ENCODE measurements at regions of chr22 and their contacts with region 1.

Region 1: DNA sequence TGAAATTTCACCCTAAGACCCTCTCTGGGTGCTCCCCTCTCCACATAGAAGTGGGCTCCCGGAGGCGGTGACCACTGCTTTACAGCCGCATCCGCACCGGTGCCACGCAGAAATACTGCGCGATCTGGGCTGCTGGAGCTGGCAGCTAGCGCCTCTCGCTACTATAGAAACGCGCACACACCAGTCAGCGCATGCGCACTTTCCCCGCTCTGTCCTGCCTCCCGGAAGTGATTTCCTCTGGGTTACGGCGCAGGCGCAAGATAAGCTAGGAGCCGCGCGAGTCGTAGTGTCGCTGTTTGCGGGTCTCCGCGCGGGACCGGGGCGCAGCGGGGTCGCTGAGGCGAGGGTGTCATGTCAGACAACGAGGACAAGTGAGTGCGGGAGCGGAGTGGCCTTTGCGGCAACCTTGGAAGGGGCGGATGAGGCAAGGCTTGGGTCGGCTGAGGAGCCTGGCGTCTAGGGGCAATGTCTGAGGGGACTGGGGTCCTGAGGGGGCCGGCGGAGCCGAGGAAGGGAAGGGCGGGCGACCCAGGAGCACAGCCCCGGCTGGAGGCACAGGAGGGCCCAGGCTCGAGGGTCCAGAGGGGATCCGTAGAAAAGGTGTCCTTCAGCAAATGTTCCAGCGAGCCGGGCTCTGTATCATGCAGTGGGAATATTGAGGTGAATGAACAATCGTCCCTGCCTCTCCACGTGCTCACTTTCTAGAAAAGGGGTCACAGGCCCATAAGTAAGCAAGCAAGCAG is at the starts of genes C22orf23 and POLR2F:
- DNase-seq: peak; percentile 94 to 96
- H3K4me3 ChIP-seq: peak within 1 kb of the TSS; percentile 100
- H3K4me1 ChIP-seq: peaks cover 5% of the 10 kb centered on the region
- H3K27me3 ChIP-seq: no peaks in the 10 kb centered on the region

Region 2: DNA sequence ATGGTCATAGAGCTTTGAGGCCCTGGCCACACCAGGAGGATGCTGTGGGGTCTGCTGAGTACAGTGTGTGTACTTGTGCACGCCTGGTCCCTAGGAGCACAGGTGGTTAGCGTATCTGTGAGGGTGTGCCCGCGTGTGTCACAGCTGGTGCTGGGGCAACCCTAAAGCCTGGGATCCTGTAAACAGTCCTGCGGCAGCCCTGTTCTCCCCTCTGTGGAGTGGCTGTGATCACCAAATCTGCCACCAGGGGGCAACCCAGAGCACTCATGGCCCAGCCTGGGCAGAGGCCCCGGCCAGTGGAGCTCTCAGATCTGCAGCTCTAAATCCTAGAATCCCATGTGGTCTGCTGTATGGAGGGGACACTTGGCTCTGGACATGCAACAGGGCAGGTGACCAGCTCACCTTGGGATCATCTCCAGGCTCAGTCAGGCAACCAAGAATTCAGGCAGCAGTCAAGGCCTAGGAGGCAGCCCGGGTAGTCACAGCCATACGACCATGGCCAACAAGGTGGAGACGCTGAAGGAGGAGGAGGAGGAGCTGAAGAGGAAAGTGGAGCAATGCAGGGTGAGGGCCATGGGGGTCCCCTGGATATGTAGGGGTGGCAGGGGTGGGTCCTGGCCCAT is 310.3 kb before region 1 on chr22:
- in situ Hi-C with region 1: no loop called
- DNase-seq: peak; percentile 41 to 93
- H3K4me3 ChIP-seq: no peak overlapping the region
- H3K4me1 ChIP-seq: peaks cover 5% of the 10 kb centered on the region; the same call in 1 of the 2 replicates
- H3K27me3 ChIP-seq: no peaks in the 10 kb centered on the region

Region 3: DNA sequence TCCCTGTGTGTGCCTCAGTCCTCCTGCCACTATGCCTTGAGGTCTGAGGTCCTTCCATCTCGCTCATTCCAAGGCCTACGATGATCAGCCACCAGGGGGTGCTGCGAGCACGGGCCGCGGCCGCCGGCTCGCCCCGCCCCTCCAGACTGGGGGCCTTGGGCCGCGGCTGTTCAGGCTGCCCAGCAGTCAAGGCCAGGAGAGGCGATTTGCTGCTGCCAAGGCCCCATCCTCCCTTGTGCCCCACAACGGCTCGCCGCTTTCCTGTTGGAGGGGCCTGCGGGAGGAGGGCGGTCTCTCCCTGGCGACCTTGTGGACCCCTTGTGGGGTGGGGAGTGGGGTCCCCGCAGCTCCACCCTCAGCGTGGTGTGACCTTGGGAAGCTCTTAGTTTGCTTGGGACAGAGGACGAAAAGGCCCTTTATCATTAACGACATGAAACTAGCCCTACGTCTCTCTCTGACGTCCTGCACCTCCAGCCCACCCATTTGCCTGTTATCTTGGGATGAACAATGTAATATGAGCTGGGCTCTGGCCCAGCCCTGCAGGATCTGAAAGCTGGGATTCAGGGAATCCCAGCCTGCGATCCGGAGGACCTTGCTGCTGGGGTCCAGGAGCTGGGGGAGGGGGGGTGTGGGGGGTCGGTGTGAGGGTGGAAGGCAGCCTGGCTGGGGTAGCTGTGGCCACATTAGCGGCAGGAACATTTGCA is 135.8 kb before region 1 on chr22:
- in situ Hi-C with region 1: loop called (anchors 10 kb)
- DNase-seq: peak; percentile 76 to 92
- H3K4me3 ChIP-seq: peak overlapping the region; percentile 9; the same call in 1 of the 2 replicates
- H3K4me1 ChIP-seq: peaks cover 4% of the 10 kb centered on the region; the same call in 1 of the 2 replicates
- H3K27me3 ChIP-seq: no peaks in the 10 kb centered on the region